Mammary epithelial cell (primary cell): ENCODE measurements at regions of chr16 and their contacts with region 1.

Region 1: GRCh38 chr16:970766-971581 is at the start of gene LMF1:
- DNase-seq: peak; percentile 86
- H3K4me3 ChIP-seq: peak within 1 kb of the TSS; percentile 40 to 72 (median 64)
- H3K27ac ChIP-seq: no peak within 1 kb of the TSS
- H3K4me1 ChIP-seq: peaks cover 13% of the 10 kb centered on the region
- H3K27me3 ChIP-seq: no peaks in the 10 kb centered on the region
- CTCF ChIP-seq: no peak
- total RNA-seq, gene LMF1: 11.0 to 25.3 TPM

Region 2: DNA sequence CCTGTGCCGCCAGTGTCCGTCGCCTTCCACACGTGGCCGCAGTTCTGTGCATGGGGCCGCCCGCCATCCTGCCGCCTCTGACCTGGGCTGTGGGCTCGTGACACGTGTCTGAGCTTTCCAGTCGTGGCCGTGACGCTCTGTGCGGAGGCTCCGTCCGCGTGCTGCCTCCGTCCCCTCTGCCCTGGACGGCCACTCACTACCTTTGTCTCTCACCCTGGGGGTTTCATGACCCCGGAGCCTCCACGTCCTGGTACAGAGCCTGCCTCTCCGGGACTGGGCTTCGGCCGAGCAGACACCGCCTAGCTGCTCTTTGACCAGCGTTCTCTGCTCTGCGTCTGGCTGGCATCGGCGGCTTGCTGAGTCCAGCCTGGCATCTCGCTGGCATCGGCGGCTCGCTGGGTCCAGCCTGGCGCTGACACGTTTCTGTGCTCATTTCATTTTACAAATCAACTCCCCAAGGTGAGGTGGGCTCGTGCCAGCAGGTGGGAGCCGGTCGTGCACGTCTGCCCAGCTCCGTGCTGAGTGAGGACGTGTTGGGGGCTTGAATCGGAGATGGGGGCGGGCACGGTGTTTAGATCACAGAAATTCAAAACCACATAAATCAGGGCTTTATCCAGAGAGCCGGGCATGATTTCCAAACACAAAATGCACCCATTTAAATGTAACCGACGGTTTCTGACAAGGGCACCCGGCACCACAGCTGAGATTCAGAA is 126.2 kb before region 1 on chr16:
- CTCF ChIA-PET with region 1: no interaction called
- dilution Hi-C with region 1: loop called (anchors 5 kb)
- in situ Hi-C with region 1: no loop called
- intact Hi-C with region 1: no loop called
- DNase-seq: no peak
- H3K4me3 ChIP-seq: no peak overlapping the region
- H3K27ac ChIP-seq: no peak overlapping the region
- H3K4me1 ChIP-seq: no peaks in the 10 kb centered on the region
- H3K27me3 ChIP-seq: no peaks in the 10 kb centered on the region
- CTCF ChIP-seq: no peak

Region 3: GRCh38 chr16:938136-938795 is 32.7 kb before region 1 on chr16:
- CTCF ChIA-PET with region 1: no interaction called
- dilution Hi-C with region 1: loop called (anchors 5 kb)
- in situ Hi-C with region 1: no loop called
- intact Hi-C with region 1: no loop called
- DNase-seq: no peak
- H3K4me3 ChIP-seq: no peak overlapping the region
- H3K27ac ChIP-seq: no peak overlapping the region
- H3K4me1 ChIP-seq: no peaks in the 10 kb centered on the region
- H3K27me3 ChIP-seq: no peaks in the 10 kb centered on the region
- CTCF ChIP-seq: no peak

Region 4: GRCh38 chr16:1020091-1020399 is 49.1 kb after region 1 on chr16:
- CTCF ChIA-PET with region 1: no interaction called
- dilution Hi-C with region 1: no loop called
- in situ Hi-C with region 1: no loop called
- intact Hi-C with region 1: no loop called
- DNase-seq: no peak
- H3K4me3 ChIP-seq: no peak overlapping the region
- H3K27ac ChIP-seq: no peak overlapping the region
- H3K4me1 ChIP-seq: peaks cover 11% of the 10 kb centered on the region
- H3K27me3 ChIP-seq: peaks cover 22% of the 10 kb centered on the region
- CTCF ChIP-seq: no peak

Region 5: GRCh38 chr16:1054660-1055556 is 83.9 kb after region 1 on chr16:
- CTCF ChIA-PET with region 1: no interaction called
- dilution Hi-C with region 1: no loop called
- in situ Hi-C with region 1: no loop called
- intact Hi-C with region 1: no loop called
- DNase-seq: peak; percentile 16
- H3K4me3 ChIP-seq: no peak overlapping the region
- H3K27ac ChIP-seq: no peak overlapping the region
- H3K4me1 ChIP-seq: no peaks in the 10 kb centered on the region
- H3K27me3 ChIP-seq: no peaks in the 10 kb centered on the region
- CTCF ChIP-seq: peak; percentile 57 to 81

Region 6: DNA sequence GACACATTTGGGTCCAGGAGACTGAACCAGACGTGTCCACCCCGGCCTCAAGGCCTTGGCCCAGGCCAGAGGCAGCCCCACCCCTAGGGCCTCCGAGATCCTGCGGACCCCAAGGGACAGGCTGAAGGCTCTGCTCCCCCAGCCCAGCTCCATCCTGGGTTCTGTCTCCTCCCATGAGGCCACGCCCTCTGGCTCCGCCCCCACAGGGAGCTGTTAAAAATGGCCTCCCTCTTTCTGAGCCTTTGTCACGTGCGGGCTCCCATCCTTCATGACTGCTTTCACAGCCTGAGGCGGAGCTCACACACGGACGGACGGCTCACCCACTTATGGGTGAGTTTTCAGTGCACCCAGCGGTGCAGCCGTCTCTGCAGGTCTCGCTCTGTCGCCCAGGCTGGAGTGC is 175.4 kb after region 1 on chr16:
- CTCF ChIA-PET with region 1: no interaction called
- dilution Hi-C with region 1: loop called (anchors 10 kb)
- in situ Hi-C with region 1: no loop called
- intact Hi-C with region 1: no loop called
- DNase-seq: no peak
- H3K4me3 ChIP-seq: no peak overlapping the region
- H3K27ac ChIP-seq: no peak overlapping the region
- H3K4me1 ChIP-seq: no peaks in the 10 kb centered on the region
- H3K27me3 ChIP-seq: no peaks in the 10 kb centered on the region
- CTCF ChIP-seq: no peak

Region 7: GRCh38 chr16:1342526-1343427 is 371.8 kb after region 1 on chr16:
- CTCF ChIA-PET with region 1: interaction called, 25 read pairs
- dilution Hi-C with region 1: no loop called
- in situ Hi-C with region 1: no loop called
- intact Hi-C with region 1: no loop called
- DNase-seq: peak; percentile 96
- H3K4me3 ChIP-seq: no peak overlapping the region
- H3K27ac ChIP-seq: no peak overlapping the region
- H3K4me1 ChIP-seq: peaks cover 16% of the 10 kb centered on the region
- H3K27me3 ChIP-seq: no peaks in the 10 kb centered on the region
- CTCF ChIP-seq: no peak